ENCODE measurements at regions of chr21 and their contacts with region 1.

Region 1: GRCh38 chr21:31161157-31161556 is 122.9 kb upstream of the KRTAP19-8 start:
- DNase-seq: no peak
- H3K4me3 Mint-ChIP-seq: no peak overlapping the region
- H3K27ac Mint-ChIP-seq: no peak overlapping the region
- H3K4me1 Mint-ChIP-seq: peaks cover 68% of the 10 kb centered on the region
- H3K27me3 Mint-ChIP-seq: no peaks in the 10 kb centered on the region

Region 2: GRCh38 chr21:30958741-30959140 is 202.4 kb before region 1 on chr21:
- CTCF ChIA-PET with region 1: no interaction called
- POLR2A ChIA-PET with region 1: no interaction called
- DNase-seq: no peak
- H3K4me3 Mint-ChIP-seq: no peak overlapping the region
- H3K27ac Mint-ChIP-seq: no peak overlapping the region
- H3K4me1 Mint-ChIP-seq: no peaks in the 10 kb centered on the region
- H3K27me3 Mint-ChIP-seq: peaks cover 3% of the 10 kb centered on the region

Region 3: DNA sequence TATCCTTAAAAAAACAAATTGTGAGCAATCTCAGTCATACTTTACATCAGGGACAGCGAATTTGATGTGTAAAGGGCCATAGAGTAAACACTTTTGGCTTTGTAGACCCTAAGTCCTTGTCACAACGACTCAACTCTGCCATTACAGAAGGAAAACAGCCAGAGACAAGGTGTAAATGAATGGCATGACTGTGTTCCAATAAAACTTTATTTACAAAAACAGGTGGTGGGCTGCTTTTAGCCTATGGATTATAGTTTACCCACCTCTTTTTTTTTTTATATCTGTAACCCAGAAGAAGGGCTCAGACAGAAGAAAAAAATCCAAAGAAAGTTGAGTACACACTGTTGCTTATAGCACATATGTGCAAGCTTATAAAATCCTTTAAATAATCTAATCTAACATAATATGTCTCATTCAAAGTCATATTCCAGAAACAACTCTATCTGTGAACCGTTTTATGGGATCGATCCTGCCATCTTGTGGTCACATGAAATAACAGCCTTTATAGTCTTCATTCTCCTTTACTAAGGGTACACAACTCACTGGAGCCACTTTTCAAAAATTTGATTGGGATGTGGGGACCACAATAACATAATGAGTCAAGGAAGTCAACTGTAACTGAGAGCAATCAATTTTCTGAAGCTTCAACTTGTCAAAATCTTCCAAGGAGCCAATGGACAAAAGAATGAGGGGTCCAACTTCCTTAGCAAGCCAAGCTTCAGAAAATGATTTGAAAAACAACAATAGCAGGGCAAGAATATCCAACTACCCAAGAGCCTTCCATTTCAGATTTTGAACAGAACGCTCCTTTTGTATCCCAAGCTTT is 19.3 kb after region 1 on chr21:
- CTCF ChIA-PET with region 1: interaction called, 29 read pairs
- POLR2A ChIA-PET with region 1: interaction called, 3 read pairs
- DNase-seq: peak; percentile 53
- H3K4me3 Mint-ChIP-seq: peak overlapping the region; percentile 64
- H3K27ac Mint-ChIP-seq: peak overlapping the region; percentile 90
- H3K4me1 Mint-ChIP-seq: peaks cover 79% of the 10 kb centered on the region
- H3K27me3 Mint-ChIP-seq: no peaks in the 10 kb centered on the region

Region 4: GRCh38 chr21:31213795-31214194 is 52.6 kb after region 1 on chr21:
- CTCF ChIA-PET with region 1: no interaction called
- POLR2A ChIA-PET with region 1: no interaction called
- DNase-seq: peak; percentile 24
- H3K4me3 Mint-ChIP-seq: no peak overlapping the region
- H3K27ac Mint-ChIP-seq: no peak overlapping the region
- H3K4me1 Mint-ChIP-seq: no peaks in the 10 kb centered on the region
- H3K27me3 Mint-ChIP-seq: no peaks in the 10 kb centered on the region